Activated naive CD4-positive, alpha-beta T cell treated with anti-CD3 and anti-CD28 coated beads for 36 hours (primary cell): ENCODE measurements at regions of chr6 and their contacts with region 1.

Region 1: GRCh38 chr6:104525677-104526312 is 333.9 kb downstream of the HACE1 start:
- DNase-seq: peak; percentile 80
- H3K4me3 Mint-ChIP-seq: peak overlapping the region; percentile 44
- H3K27ac Mint-ChIP-seq: no peak overlapping the region
- H3K4me1 Mint-ChIP-seq: peaks cover 2% of the 10 kb centered on the region
- H3K27me3 Mint-ChIP-seq: peaks cover 15% of the 10 kb centered on the region

Region 2: DNA sequence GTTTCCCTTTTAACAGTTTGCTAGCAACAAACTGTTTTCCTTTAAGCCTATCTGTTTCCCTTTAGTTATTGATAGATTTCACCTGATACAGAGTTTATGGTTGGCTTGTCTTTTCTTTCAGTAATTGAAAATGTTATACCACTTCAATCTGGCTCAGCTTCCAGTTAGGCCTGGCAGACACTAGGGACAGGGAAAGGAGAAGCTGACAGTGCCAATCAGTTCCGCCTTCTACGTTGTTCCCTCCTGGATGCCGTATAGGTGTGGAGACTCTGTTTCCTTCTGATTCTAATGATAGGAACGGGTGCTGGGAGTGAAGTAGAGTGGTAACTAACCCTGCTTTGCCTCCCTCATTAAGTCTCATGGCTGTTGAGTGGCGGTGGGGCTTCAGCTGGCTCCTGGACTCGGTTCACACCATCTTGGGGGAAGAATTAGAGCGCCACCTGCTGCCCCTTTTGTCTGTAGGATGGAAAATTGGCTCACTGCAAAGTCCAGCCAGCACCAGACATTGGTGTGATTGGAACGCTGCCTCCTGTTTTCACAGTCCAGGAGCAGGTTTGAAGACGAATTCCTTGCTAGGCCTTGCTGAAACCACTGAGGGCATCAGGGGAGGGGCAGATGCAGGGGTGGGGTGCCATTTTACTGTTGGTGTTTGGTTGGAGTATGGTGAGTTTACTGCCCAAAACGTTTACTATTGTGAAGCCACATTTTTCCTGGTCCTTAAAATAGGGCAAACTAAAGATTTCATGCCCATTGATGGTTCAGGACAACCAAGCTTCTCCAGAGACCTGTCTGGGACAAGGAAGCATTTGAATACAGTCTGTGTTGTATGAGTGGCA is 1402.8 kb before region 1 on chr6:
- CTCF ChIA-PET with region 1: no interaction called
- intact Hi-C with region 1: loop called (anchors 10 kb)
- DNase-seq: peak; percentile 42
- H3K4me3 Mint-ChIP-seq: no peak overlapping the region
- H3K27ac Mint-ChIP-seq: no peak overlapping the region
- H3K4me1 Mint-ChIP-seq: no peaks in the 10 kb centered on the region
- H3K27me3 Mint-ChIP-seq: no peaks in the 10 kb centered on the region

Region 3: GRCh38 chr6:104325341-104326172 is 200.2 kb before region 1 on chr6:
- CTCF ChIA-PET with region 1: no interaction called
- intact Hi-C with region 1: loop called (anchors 10 kb)
- DNase-seq: peak; percentile 8
- H3K4me3 Mint-ChIP-seq: no peak overlapping the region
- H3K27ac Mint-ChIP-seq: no peak overlapping the region
- H3K4me1 Mint-ChIP-seq: no peaks in the 10 kb centered on the region
- H3K27me3 Mint-ChIP-seq: peaks cover 5% of the 10 kb centered on the region

Region 4: DNA sequence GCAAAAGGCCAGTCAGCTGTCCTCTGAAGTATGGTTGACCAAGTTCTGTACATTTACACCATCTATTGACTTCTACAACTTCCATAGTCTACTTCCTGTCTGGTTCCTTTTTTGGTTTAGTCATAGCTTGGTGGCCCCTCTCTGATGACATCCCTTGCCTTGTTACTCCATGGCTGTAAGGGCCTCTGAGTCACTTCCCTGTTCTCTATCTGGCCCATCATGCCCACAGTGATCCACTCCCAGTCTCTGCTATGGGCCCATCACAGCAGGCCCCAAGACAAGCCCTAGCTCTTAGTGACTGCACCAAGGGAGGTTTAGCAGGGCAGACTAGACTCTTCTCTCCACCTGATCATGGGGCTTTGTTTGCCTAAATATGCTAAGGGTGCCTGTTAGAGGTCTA is 107.7 kb before region 1 on chr6:
- CTCF ChIA-PET with region 1: no interaction called
- intact Hi-C with region 1: no loop called
- DNase-seq: peak; percentile 4
- H3K4me3 Mint-ChIP-seq: no peak overlapping the region
- H3K27ac Mint-ChIP-seq: no peak overlapping the region
- H3K4me1 Mint-ChIP-seq: no peaks in the 10 kb centered on the region
- H3K27me3 Mint-ChIP-seq: no peaks in the 10 kb centered on the region

Region 5: GRCh38 chr6:104771258-104771832 is 245.6 kb after region 1 on chr6:
- CTCF ChIA-PET with region 1: no interaction called
- intact Hi-C with region 1: loop called (anchors 5 kb)
- DNase-seq: no peak
- H3K4me3 Mint-ChIP-seq: no peak overlapping the region
- H3K27ac Mint-ChIP-seq: no peak overlapping the region
- H3K4me1 Mint-ChIP-seq: no peaks in the 10 kb centered on the region
- H3K27me3 Mint-ChIP-seq: no peaks in the 10 kb centered on the region